Activated B cell treated with CpG ODN at 0.5 μM for 24 hours (primary cell): ENCODE measurements at regions of chr2 and their contacts with region 1.

Region 1: DNA sequence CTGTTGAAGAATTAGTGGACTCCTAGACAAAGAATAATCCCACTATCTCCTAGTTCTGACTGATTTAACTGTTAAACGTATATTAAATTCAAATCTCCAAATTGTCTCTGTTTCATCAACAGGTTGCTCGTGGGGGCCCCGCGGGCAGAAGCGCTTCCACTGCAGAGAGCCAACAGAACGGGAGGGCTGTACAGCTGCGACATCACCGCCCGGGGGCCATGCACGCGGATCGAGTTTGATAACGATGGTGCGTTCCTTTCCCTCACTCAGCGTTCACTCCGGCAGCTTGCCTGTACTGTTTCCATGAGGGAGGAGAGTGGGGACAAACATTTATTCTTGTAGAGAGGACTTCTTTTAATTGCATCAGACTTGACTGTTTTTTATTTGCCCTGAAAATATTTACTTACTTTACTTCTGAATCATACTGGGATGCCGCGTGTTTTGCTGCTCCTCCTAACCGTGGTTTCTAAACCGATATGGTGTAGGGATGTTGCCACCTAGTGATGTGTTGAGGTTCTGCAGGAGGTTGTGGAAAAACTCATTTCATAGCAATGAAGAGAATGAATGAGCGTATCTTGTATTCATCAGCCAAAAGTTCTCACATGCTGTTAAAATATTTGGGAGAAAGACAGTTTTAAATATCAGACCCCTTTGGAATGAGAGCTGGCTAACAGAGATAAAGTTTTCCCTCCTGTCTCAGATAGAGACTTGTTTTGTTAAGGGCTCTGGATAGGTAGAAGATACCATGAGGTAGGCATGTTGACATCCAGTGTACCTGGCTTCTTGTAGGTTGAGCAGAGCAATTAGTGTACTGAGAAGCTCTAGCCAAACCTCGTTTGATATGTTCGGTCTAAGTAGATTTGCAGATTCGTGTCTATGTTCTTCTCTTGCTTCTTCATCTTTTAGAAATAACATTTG is 38.3 kb downstream of the ITGA6 start:
- DNase-seq: no peak
- ATAC-seq: peak; percentile 74
- H3K4me3 Mint-ChIP-seq: no peak overlapping the region
- H3K27ac Mint-ChIP-seq: no peak overlapping the region
- H3K4me1 Mint-ChIP-seq: peaks cover 49% of the 10 kb centered on the region
- H3K27me3 Mint-ChIP-seq: peaks cover 2% of the 10 kb centered on the region
- CTCF ChIP-seq: peak; percentile 83

Region 2: GRCh38 chr2:171598713-171599319 is 866.9 kb before region 1 on chr2:
- CTCF ChIA-PET with region 1: interaction called, 13 read pairs
- POLR2A ChIA-PET with region 1: no interaction called
- intact Hi-C with region 1: loop called (anchors 1 kb)
- DNase-seq: no peak
- ATAC-seq: peak; percentile 96
- H3K4me3 Mint-ChIP-seq: no peak overlapping the region
- H3K27ac Mint-ChIP-seq: no peak overlapping the region
- H3K4me1 Mint-ChIP-seq: peaks cover 3% of the 10 kb centered on the region
- H3K27me3 Mint-ChIP-seq: peaks cover 4% of the 10 kb centered on the region
- CTCF ChIP-seq: no peak

Region 3: GRCh38 chr2:171703574-171704347 is 761.9 kb before region 1 on chr2:
- CTCF ChIA-PET with region 1: interaction called, 18 read pairs
- POLR2A ChIA-PET with region 1: no interaction called
- intact Hi-C with region 1: loop called (anchors 1 kb)
- DNase-seq: no peak
- ATAC-seq: no peak
- H3K4me3 Mint-ChIP-seq: no peak overlapping the region
- H3K27ac Mint-ChIP-seq: no peak overlapping the region
- H3K4me1 Mint-ChIP-seq: peaks cover 18% of the 10 kb centered on the region
- H3K27me3 Mint-ChIP-seq: no peaks in the 10 kb centered on the region
- CTCF ChIP-seq: no peak

Region 4: DNA sequence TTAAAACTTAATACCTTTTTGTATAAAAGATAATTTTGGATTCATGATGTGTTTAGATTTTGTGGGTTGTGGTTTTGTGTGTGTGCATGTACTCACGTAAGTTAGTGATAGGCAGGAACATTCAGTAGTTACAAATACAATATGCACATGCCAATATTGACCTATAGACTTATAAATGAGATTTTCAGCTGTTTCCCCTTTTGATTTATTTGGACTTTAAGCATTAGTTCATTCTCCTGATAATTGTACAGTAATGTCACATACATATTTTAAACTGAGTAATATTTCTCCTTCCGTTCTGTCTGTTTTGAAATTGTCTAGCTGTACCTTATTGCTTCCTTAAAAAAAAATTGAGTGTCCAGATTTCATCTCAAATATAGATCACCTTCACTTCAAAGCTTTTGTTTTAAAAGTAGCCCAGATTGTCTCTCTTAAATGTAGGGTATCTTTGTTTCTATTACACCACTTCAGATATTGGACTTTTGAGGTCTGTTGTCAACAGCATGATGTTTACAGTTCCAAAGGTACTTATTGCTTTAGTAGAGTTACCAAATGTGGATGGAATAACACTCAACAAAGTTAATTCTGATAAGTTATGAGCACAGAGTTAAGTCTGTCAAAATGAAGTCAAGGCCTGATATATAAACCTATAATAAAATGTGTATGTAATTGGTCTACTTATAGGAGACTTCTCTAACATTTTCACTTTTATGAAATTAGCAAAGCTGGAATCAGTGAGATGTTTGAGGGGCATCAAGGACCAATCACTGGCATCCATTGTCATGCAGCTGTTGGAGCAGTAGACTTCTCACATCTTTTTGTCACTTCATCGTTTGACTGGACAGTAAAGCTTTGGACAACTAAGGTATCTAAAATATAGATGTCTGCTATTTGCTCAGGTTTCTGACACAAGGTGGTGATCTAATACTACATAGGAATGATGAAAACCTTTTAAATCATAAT is 736.4 kb before region 1 on chr2:
- CTCF ChIA-PET with region 1: no interaction called
- POLR2A ChIA-PET with region 1: no interaction called
- intact Hi-C with region 1: no loop called
- DNase-seq: no peak
- ATAC-seq: no peak
- H3K4me3 Mint-ChIP-seq: no peak overlapping the region
- H3K27ac Mint-ChIP-seq: no peak overlapping the region
- H3K4me1 Mint-ChIP-seq: no peaks in the 10 kb centered on the region
- H3K27me3 Mint-ChIP-seq: no peaks in the 10 kb centered on the region
- CTCF ChIP-seq: no peak

Region 5: GRCh38 chr2:171957061-171957460 is 508.6 kb before region 1 on chr2:
- CTCF ChIA-PET with region 1: no interaction called
- POLR2A ChIA-PET with region 1: no interaction called
- intact Hi-C with region 1: loop called (anchors 10 kb)
- DNase-seq: no peak
- ATAC-seq: no peak
- H3K4me3 Mint-ChIP-seq: no peak overlapping the region
- H3K27ac Mint-ChIP-seq: no peak overlapping the region
- H3K4me1 Mint-ChIP-seq: no peaks in the 10 kb centered on the region
- H3K27me3 Mint-ChIP-seq: no peaks in the 10 kb centered on the region
- CTCF ChIP-seq: no peak

Region 6: GRCh38 chr2:172427256-172427989 is 38.3 kb before region 1 on chr2 and contains the start of gene ITGA6:
- CTCF ChIA-PET with region 1: interaction called, 6 read pairs
- POLR2A ChIA-PET with region 1: no interaction called
- intact Hi-C with region 1: loop called (anchors 2 kb)
- DNase-seq: peak; percentile 38
- ATAC-seq: peak; percentile 72
- H3K4me3 Mint-ChIP-seq: peak within 1 kb of the TSS; percentile 79
- H3K27ac Mint-ChIP-seq: no peak within 1 kb of the TSS
- H3K4me1 Mint-ChIP-seq: peaks cover 14% of the 10 kb centered on the region
- H3K27me3 Mint-ChIP-seq: peaks cover 57% of the 10 kb centered on the region
- CTCF ChIP-seq: no peak
- total RNA-seq, gene ITGA6: 0.31 and 0.42 TPM in 2 replicates

Region 7: GRCh38 chr2:172869861-172870260 is 404.2 kb after region 1 on chr2:
- CTCF ChIA-PET with region 1: no interaction called
- POLR2A ChIA-PET with region 1: no interaction called
- intact Hi-C with region 1: no loop called
- DNase-seq: no peak
- ATAC-seq: no peak
- H3K4me3 Mint-ChIP-seq: no peak overlapping the region
- H3K27ac Mint-ChIP-seq: no peak overlapping the region
- H3K4me1 Mint-ChIP-seq: no peaks in the 10 kb centered on the region
- H3K27me3 Mint-ChIP-seq: no peaks in the 10 kb centered on the region
- CTCF ChIP-seq: no peak